ENCODE measurements at regions of chr4 and their contacts with region 1.

Region 1: DNA sequence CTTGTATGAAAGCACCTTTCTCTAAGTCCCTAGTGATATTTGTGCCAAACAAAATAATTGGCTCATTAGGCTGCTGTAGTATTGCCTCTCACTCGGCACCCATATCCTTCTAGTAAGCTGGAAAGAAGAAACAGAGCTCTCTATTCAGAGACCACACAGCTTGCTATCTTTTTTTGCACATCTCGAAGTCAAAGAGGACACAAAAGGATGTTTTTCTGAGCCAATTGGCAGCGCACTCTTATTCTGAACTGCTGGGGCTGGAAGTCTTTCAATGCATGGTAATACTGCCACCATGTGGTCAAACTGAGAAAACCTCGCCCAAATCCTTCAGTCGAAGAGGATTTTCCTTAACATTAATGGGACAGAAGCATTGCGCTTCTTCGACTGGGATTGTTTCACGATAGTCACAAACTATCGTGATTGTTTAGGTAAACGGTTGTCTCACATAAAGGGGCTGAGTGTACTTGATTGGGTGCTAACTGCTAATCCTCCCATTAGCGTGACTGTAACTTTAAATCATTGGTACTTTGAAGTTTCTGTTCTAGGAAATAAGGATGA is 572.0 kb upstream of the LCORL start:
- DNase-seq: peak; percentile 79
- H3K4me3 ChIP-seq: peak overlapping the region; percentile 66
- H3K27ac ChIP-seq: no peak overlapping the region
- H3K4me1 ChIP-seq: no peaks in the 10 kb centered on the region
- H3K27me3 ChIP-seq: no peaks in the 10 kb centered on the region

Region 2: DNA sequence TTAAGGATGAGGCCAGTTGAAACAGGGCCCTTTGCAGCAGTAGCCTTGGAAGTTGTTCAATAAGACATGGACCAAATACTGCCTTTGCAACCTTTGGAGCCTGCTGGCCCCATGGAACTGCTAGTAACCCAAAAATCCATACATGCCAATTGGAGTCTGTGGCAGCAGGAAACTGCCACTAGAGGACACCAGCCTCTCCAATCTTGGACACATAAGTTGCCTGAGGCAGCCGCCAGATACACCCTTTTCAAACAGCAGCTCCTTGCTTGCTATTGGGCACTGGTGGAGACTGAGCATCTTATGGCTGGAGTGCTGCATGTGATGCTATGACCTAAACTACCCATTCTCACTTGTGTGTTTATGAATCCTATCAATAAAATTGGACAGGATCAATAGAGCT is 1031.4 kb before region 1 on chr4:
- in situ Hi-C with region 1: loop called (anchors 25 kb)
- DNase-seq: peak; percentile 12
- H3K4me3 ChIP-seq: no peak overlapping the region
- H3K27ac ChIP-seq: no peak overlapping the region
- H3K4me1 ChIP-seq: peaks cover 14% of the 10 kb centered on the region
- H3K27me3 ChIP-seq: no peaks in the 10 kb centered on the region

Region 3: DNA sequence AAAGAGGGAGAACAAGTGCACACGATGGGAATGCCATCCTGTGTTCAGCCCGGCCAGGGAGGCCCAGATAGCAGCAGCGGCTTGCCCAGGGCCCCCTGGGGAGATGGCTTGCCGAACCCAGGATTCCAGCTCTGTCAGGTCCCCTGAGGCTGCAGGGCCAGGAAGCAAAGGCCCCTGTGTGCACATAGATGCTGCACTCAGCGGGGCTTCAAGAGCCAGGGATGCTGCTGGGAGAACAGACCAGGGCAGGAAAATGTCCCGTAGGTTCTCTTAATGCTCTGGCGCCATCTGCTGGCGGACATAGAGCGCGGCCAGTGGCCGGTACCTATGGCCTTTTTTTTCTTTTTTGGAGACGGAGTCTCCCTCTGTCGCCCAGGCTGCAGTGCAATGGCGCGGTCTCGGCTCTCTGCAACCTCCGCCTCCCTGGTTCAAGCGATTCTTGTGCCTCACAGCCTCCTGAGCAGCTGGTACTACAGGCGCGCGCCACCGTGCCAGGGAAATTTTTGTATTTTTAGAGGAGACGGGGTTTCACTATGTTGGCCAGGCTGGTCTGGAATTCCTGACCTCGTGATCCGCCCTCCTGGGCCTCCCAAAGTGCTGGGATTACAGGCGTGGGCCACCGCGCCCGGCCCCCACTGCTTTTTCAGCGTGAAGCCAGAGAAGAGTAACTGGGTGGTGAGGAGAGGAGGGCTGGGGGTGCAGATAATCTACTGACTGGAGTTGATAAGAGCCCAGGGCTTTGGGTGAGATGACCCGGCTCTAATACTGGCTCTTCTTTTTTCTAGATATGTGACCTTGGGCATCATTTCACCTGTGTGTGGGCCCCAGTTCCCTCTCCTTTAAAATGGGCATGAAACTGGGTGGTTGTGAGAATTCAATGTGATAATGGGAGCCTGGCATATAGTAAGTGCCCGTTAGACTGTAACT is 956.6 kb before region 1 on chr4:
- in situ Hi-C with region 1: loop called (anchors 10 kb)
- DNase-seq: peak; percentile 86
- H3K4me3 ChIP-seq: no peak overlapping the region
- H3K27ac ChIP-seq: no peak overlapping the region
- H3K4me1 ChIP-seq: no peaks in the 10 kb centered on the region
- H3K27me3 ChIP-seq: no peaks in the 10 kb centered on the region

Region 4: DNA sequence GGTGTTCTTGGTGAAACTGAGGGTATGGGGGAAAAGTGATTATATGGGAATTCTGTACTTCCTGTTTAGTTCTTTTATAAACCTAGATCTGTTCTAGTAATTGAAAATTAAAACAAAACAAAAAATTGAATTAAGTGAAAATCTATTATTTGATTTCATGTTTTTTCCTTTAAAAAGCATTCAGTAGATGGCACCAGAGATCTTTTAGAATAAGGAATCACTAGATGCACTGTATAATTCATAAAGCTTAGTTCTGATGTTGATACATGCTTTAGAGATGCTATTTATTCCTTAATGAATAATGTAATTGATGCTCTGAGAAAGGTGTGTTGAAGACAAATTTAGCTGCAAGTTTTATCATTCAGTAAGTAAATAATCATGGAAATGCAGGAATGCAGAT is 659.2 kb before region 1 on chr4:
- in situ Hi-C with region 1: loop called (anchors 25 kb)
- DNase-seq: peak; percentile 21
- H3K4me3 ChIP-seq: no peak overlapping the region
- H3K27ac ChIP-seq: no peak overlapping the region
- H3K4me1 ChIP-seq: peaks cover 6% of the 10 kb centered on the region; the same call in 1 of the 2 replicates
- H3K27me3 ChIP-seq: no peaks in the 10 kb centered on the region

Region 5: DNA sequence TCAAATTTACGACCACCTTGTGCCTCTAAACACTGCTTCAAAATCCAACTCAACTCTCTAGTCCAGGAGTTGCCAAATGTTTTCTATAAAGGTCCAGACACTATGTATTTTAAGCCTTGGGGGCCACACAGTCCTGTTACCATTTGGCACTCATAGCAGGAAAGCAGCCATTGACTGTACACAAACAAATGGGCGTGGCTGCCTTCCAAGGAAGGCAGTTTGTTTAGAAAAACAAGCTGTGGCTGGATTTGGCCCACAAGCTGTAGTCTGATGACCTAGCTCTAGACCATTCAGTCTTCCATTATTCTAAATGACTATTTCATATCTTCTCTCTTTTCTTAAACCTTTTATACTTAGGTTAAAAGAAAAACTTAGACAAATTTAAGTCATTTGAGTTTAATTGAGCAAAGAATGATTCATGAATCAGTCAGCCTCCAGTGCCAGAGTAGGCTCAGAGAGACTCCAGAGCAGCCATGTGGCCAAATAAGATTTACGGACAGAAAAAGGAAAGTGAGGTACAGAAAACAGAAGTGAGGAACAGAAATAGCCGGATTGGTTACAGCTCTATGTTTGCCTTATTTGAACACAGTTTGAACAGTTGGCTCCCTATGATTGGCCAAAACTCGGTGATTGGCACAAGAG is 253.8 kb after region 1 on chr4:
- in situ Hi-C with region 1: no loop called
- DNase-seq: no peak
- H3K4me3 ChIP-seq: no peak overlapping the region
- H3K27ac ChIP-seq: no peak overlapping the region
- H3K4me1 ChIP-seq: no peaks in the 10 kb centered on the region
- H3K27me3 ChIP-seq: no peaks in the 10 kb centered on the region